CD8-positive, alpha-beta T cell (primary cell): ENCODE measurements at regions of chr12 and their contacts with region 1.

Region 1: GRCh38 chr12:69570545-69571399 is 14.5 kb upstream of the CCT2 start:
- DNase-seq: peak in 8 of 9 experiments; percentile 5 to 86 (median 56)
- ATAC-seq: peak; percentile 83
- H3K4me3 ChIP-seq: no peak overlapping the region
- H3K4me3 Mint-ChIP-seq: no peak overlapping the region
- H3K27ac ChIP-seq: no peak overlapping the region
- H3K27ac Mint-ChIP-seq: no peak overlapping the region
- H3K4me1 ChIP-seq: no peaks in the 10 kb centered on the region
- H3K4me1 Mint-ChIP-seq: no peaks in the 10 kb centered on the region
- H3K27me3 ChIP-seq: no peaks in the 10 kb centered on the region
- H3K27me3 Mint-ChIP-seq: no peaks in the 10 kb centered on the region
- CTCF ChIP-seq: peak; percentile 94

Region 2: GRCh38 chr12:69415471-69416275 is 155.1 kb before region 1 on chr12:
- CTCF ChIA-PET with region 1: no interaction called
- POLR2A ChIA-PET with region 1: no interaction called
- intact Hi-C with region 1: loop called in 1 of 2 experiments (anchors 1 kb)
- DNase-seq: peak in 2 of 9 experiments; percentile 12 to 31
- ATAC-seq: no peak
- H3K4me3 ChIP-seq: no peak overlapping the region
- H3K4me3 Mint-ChIP-seq: no peak overlapping the region
- H3K27ac ChIP-seq: no peak overlapping the region
- H3K27ac Mint-ChIP-seq: no peak overlapping the region
- H3K4me1 ChIP-seq: no peaks in the 10 kb centered on the region
- H3K4me1 Mint-ChIP-seq: no peaks in the 10 kb centered on the region
- H3K27me3 ChIP-seq: no peaks in the 10 kb centered on the region
- H3K27me3 Mint-ChIP-seq: no peaks in the 10 kb centered on the region
- CTCF ChIP-seq: no peak

Region 3: DNA sequence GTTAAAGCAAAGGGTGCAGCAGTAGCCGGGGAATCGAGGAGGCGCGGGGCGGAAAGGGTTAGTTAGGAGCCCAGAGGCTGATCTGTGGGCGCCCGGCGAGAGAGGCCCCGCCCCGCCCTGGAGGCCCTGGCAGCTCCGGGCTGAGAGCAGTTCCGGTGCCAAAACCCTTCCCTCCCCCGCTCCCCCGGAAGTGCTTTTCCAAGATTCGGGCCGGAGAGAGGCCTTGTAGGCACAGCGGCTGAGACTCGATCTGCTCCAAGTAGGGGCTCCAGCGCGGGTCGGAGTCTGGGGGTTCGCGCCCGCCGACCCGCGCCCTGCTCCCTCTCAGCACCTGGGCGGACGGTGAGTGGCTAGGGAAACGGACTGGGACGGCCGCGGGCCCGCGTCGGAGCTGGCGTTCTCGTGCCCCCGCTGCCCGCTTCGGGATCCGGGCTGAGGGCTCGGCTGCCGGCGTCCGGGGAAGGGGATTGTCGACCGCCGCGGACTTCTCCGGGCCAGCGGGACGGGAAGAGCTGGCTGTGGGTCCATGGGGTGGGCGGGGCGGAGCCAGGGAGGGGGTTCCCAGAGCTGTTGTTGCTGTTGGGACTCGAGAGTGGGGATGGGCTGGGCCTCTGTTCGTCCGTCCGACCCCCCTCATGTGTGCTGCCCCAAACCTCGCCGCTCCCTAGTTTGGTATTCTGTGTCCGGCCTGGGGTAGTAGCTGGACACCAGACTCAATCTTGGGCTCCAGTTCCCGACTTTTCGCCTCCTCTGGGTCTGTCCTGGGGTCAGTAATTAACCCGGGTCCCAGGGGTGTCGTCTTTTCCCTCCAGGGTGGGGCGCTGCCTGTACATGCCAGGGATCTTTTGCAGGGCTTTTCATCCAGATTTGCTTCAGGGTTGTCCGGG is 100.3 kb before region 1 on chr12 and contains the start of gene FRS2:
- CTCF ChIA-PET with region 1: no interaction called
- POLR2A ChIA-PET with region 1: no interaction called
- intact Hi-C with region 1: loop called in 1 of 2 experiments (anchors 5 kb)
- DNase-seq: peak; percentile 66 to 91 (median 84)
- ATAC-seq: peak; percentile 97
- H3K4me3 ChIP-seq: peak within 1 kb of the TSS; percentile 86 to 88
- H3K4me3 Mint-ChIP-seq: peak within 1 kb of the TSS; percentile 98
- H3K27ac ChIP-seq: peak within 1 kb of the TSS; percentile 76 to 82
- H3K27ac Mint-ChIP-seq: peak within 1 kb of the TSS; percentile 97
- H3K4me1 ChIP-seq: peaks cover 30% of the 10 kb centered on the region
- H3K4me1 Mint-ChIP-seq: peaks cover 46% of the 10 kb centered on the region
- H3K27me3 ChIP-seq: no peaks in the 10 kb centered on the region
- H3K27me3 Mint-ChIP-seq: no peaks in the 10 kb centered on the region
- CTCF ChIP-seq: no peak
- total RNA-seq, gene FRS2: 31.1 to 32.4 TPM

Region 4: DNA sequence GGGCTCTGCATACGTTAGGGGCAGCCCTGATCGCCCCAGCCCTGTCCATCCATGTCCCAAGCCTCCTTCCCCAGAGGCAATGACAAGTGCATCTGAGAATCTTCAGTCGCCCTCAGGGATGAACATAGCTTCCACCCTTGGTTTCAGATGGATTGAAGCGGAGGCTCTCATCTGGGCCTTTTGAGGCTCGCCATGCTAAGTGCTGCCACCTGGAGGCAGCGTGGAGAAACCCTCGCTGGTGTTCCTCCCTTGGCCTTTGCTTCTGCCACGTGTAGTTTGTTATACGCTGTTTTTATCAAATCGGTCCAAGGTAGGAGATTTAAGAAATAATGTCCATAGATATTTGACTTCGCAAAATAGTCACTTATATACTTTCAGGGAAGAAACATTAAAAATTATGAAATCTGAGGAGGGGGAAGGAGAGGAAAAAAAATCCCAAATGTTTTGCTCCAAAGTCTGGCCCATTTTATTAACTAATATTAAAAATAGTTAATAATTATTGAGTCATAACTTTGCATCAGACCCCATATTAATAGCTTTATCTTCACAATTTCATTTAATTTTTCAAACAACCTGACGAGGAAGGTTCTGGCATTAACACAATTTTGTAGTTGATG is 68.7 kb after region 1 on chr12:
- CTCF ChIA-PET with region 1: interaction called, 3 read pairs
- POLR2A ChIA-PET with region 1: no interaction called
- intact Hi-C with region 1: loop called in 1 of 2 experiments (anchors 2 kb)
- DNase-seq: peak; percentile 15 to 71 (median 53)
- ATAC-seq: peak; percentile 73
- H3K4me3 ChIP-seq: no peak overlapping the region
- H3K4me3 Mint-ChIP-seq: no peak overlapping the region
- H3K27ac ChIP-seq: no peak overlapping the region
- H3K27ac Mint-ChIP-seq: no peak overlapping the region
- H3K4me1 ChIP-seq: no peaks in the 10 kb centered on the region
- H3K4me1 Mint-ChIP-seq: no peaks in the 10 kb centered on the region
- H3K27me3 ChIP-seq: no peaks in the 10 kb centered on the region
- H3K27me3 Mint-ChIP-seq: no peaks in the 10 kb centered on the region
- CTCF ChIP-seq: peak; percentile 81